ENCODE measurements at regions of chr3 and their contacts with region 1.

Region 1: GRCh38 chr3:11509173-11510000 is 134.3 kb downstream of the VGLL4 start:
- DNase-seq: peak; percentile 55 to 91
- H3K4me3 ChIP-seq: peak overlapping the region in 1 of 2 donors; percentile 30
- H3K27ac ChIP-seq: peak overlapping the region; percentile 89 to 97
- H3K4me1 ChIP-seq: peaks cover 18 to 45% of the 10 kb centered on the region in 2 donors
- H3K27me3 ChIP-seq: no peaks in the 10 kb centered on the region
- CTCF ChIP-seq: peak in 2 of 3 experiments; percentile 13 to 26

Region 2: GRCh38 chr3:11367143-11367693 is 142.2 kb before region 1 on chr3:
- intact Hi-C with region 1: no loop called
- DNase-seq: peak in 1 of 2 donors; percentile 70
- H3K4me3 ChIP-seq: no peak overlapping the region
- H3K27ac ChIP-seq: peak overlapping the region; percentile 57 to 58
- H3K4me1 ChIP-seq: peaks cover 0 to 7% of the 10 kb centered on the region in 2 donors
- H3K27me3 ChIP-seq: no peaks in the 10 kb centered on the region
- CTCF ChIP-seq: no peak

Region 3: GRCh38 chr3:11385891-11386290 is 123.5 kb before region 1 on chr3:
- intact Hi-C with region 1: loop called (anchors 5 kb)
- DNase-seq: no peak
- H3K4me3 ChIP-seq: no peak overlapping the region
- H3K27ac ChIP-seq: peak overlapping the region; percentile 13 to 24
- H3K4me1 ChIP-seq: peaks cover 0 to 32% of the 10 kb centered on the region in 2 donors
- H3K27me3 ChIP-seq: no peaks in the 10 kb centered on the region
- CTCF ChIP-seq: no peak

Region 4: DNA sequence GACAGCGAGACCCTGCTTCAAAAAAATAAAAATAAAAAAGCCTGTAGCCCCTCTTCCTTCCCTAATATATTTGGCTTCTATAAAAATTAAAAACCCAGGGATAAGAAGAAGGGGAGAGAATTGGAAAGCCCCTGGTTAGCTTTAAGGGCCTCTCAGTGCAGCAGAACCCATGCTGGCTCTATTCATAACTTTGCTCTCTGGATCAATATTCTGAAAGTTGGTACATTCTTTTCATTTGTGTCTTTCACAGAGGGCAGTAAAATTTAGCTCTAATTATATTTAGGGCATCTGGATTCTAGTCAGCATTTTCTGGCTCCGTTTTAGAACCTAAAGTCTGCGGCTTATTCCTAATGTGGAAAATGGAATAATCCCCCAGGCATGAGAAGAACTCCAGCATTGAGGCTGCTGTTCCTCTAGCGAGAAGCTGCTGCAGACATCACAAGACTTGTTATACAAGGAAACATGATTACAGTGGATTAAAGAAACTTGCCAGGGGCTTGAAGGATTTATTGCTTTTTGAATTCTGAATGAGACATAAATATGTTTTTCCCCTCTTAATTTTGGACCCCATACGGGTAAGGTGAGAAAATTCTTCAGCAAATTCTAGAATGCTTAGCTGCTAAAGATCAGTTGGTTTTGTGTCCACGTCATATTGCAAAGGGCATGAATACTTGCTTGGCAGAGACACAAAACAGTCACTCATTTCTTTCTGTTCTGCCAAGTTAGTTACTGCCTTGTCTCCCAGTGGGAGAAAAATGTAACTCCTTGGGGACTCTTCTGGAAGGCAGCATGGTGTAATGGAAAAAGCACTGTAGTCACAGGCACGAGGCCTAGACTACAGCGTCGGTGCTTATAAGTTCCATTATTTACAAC is 43.4 kb before region 1 on chr3:
- intact Hi-C with region 1: loop called (anchors 1 kb)
- DNase-seq: peak in 1 of 2 donors; percentile 90
- H3K4me3 ChIP-seq: peak overlapping the region in 1 of 2 donors; percentile 32
- H3K27ac ChIP-seq: peak overlapping the region; percentile 91 to 92
- H3K4me1 ChIP-seq: peaks cover 4 to 33% of the 10 kb centered on the region in 2 donors
- H3K27me3 ChIP-seq: no peaks in the 10 kb centered on the region
- CTCF ChIP-seq: no peak

Region 5: DNA sequence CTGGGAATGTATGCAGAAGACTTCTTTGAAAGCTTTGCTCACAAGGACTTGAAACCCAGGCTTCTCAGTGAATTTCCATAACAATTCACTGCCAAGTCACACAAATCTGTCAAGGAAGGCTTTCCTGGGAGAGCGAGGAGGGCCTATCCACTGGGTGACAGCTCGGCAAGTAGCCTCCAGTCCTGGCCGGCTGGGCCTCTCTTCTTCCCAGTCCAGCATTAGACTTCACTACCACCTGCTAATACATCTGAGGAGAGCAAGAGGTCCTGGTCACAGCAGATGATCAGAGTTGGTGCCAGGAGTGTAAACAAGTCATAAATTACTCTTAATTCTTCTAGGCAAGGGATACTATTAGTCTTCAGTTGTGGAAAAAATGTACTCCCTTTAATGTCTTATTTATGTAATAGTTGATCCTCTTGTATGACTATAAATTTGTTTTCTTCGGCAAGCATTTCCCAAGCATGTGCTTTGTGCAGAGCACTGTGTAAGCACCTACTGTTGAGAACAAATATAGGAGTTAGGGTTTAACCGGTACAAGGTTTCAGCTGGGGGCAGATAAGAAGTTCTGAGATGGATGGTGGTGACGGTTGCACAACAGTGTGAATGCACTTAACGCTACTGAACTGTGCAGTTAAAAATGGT is 28.6 kb before region 1 on chr3:
- intact Hi-C with region 1: loop called (anchors 2 kb)
- DNase-seq: no peak
- H3K4me3 ChIP-seq: no peak overlapping the region
- H3K27ac ChIP-seq: peak overlapping the region; percentile 72 to 88
- H3K4me1 ChIP-seq: peaks cover 13 to 36% of the 10 kb centered on the region in 2 donors
- H3K27me3 ChIP-seq: no peaks in the 10 kb centered on the region
- CTCF ChIP-seq: no peak

Region 6: GRCh38 chr3:11568503-11569155 is 59.2 kb after region 1 on chr3:
- intact Hi-C with region 1: loop called (anchors 5 kb)
- DNase-seq: peak; percentile 70 to 97
- H3K4me3 ChIP-seq: peak overlapping the region; percentile 29 to 54
- H3K27ac ChIP-seq: peak overlapping the region; percentile 97 to 99
- H3K4me1 ChIP-seq: peaks cover 16 to 55% of the 10 kb centered on the region in 2 donors
- H3K27me3 ChIP-seq: no peaks in the 10 kb centered on the region
- CTCF ChIP-seq: no peak

Region 7: DNA sequence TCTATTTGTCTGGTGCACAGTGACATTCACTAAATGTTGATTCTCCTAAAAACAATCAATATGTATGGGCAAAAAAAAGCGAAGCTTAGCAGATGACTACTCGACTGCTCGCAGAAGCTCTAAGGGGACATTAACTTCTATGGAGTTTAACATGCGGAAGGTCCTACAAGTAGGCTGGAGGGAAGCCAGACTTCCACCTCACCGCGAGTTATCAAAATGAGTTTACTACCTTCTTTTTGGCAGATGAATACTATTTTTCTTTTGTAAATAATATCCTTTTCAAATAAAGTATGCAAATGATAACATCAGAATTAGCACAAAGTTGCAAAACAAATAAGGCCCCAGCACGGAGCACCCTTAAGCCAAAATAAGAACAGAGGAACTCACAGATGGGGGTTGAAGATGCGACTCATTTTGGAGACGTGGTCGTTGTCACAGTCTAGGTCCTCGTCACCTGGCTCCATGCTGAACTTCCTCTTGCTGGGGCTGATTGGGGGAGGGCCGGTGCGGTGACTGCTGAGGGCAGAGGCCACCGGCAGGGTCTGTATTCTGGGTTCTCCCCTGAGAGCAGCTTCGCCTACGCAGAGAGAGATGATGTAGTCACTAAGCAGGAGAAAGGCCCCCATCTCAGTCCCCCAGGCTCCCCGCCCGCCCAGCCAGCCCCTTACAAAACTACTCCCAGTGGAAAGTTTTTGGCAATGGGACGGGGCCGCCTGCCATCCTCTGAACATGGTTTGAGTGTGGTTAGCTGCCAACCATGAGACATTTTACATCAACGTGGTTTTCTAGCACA is 92.3 kb after region 1 on chr3:
- intact Hi-C with region 1: loop called (anchors 5 kb)
- DNase-seq: peak; percentile 35 to 89
- H3K4me3 ChIP-seq: peak overlapping the region in 1 of 2 donors; percentile 37
- H3K27ac ChIP-seq: peak overlapping the region; percentile 85 to 91
- H3K4me1 ChIP-seq: peaks cover 14 to 51% of the 10 kb centered on the region in 2 donors
- H3K27me3 ChIP-seq: no peaks in the 10 kb centered on the region
- CTCF ChIP-seq: no peak

Region 8: GRCh38 chr3:11643605-11644087 is 134.3 kb after region 1 on chr3 and contains the start of gene VGLL4:
- intact Hi-C with region 1: loop called (anchors 2 kb)
- DNase-seq: peak; percentile 50 to 93
- H3K4me3 ChIP-seq: peak within 1 kb of the TSS; percentile 79 to 82
- H3K27ac ChIP-seq: peak within 1 kb of the TSS; percentile 94 to 98
- H3K4me1 ChIP-seq: peaks cover 10 to 22% of the 10 kb centered on the region in 2 donors
- H3K27me3 ChIP-seq: no peaks in the 10 kb centered on the region
- CTCF ChIP-seq: peak in 1 of 3 experiments; percentile 11
- total RNA-seq, gene VGLL4: 146 TPM